ENCODE measurements at regions of chr6 and their contacts with region 1.

Region 1: DNA sequence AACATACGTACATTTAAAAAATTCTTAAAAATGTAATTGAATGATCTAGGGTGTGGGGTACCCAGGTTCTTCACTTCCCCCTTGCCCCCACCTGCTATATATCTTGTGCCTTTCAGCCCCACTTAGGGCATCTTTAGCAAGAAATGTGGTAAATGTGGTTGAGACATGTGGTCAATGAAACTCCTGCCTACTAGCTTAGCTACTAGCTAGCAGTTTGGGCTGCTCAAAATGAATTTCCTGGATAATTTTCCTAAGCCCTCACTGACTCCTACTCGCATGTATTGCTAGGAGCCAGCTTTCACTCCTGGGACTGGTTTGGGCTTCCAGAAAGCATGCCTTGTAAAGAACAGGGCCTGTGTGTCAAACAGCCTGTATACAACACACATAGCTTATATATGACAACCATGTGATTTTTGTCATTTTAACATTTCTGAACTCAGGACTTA is 257.3 kb downstream of the ATXN1 start:
- DNase-seq: no peak
- ATAC-seq: no peak
- H3K4me3 ChIP-seq: no peak overlapping the region
- H3K27ac ChIP-seq: no peak overlapping the region
- H3K4me1 ChIP-seq: peaks cover 11% of the 10 kb centered on the region
- H3K27me3 ChIP-seq: no peaks in the 10 kb centered on the region
- CTCF ChIP-seq: no peak

Region 2: DNA sequence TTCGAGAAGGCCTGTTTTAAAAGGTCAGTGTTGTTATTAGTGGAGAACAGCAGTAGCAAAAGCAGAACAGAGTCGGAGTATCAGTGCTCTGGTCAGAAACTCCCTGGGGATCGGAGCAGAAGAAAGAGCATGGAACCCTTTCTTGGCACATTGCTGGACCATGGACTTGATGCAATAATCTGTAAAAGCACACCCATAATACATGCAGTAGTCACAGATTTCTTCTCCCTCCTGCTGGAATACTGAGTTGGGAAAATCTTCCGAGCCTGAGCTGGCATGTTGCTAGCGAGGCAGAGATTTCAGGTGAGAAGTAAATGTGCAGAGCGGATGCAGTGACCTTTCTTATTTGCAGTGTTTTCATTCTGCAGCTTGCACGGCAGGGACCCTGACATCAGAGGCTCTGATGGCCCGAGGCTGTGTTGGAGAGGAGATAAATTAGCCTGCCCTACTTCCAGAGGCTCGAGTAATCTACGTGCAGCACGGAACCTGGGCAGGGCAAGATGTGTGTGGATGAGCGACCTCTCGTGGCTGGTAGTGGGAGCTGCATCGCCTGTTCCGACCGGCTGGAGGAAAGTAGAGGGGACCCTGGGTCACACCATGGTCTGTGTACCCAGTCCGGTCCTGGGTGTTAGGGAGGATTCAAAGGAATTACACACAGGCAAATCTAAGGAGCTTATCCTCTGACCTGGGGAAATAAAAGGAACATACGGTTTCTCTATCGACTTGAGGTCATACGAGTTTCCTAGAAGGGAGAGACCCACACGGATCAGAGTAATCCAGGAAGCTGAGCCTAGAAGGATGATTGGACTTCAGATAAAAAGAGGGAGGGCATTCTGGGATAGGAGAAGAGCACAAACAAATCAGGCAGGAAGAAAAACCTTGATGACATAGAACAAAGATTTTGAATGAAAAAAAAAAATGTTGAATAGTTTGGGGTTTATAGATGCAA is 460.8 kb after region 1 on chr6:
- intact Hi-C with region 1: loop called in 1 of 2 experiments (anchors 10 kb)
- DNase-seq: peak; percentile 62 to 81
- ATAC-seq: peak; percentile 85 to 98 (median 96)
- H3K4me3 ChIP-seq: peak overlapping the region; percentile 11
- H3K27ac ChIP-seq: no peak overlapping the region
- H3K4me1 ChIP-seq: peaks cover 6% of the 10 kb centered on the region
- H3K27me3 ChIP-seq: peaks cover 0 to 3% (median 0%) of the 10 kb centered on the region in 3 donors
- CTCF ChIP-seq: peak; percentile 91